ENCODE measurements at regions of chr1 and their contacts with region 1.

Region 1: DNA sequence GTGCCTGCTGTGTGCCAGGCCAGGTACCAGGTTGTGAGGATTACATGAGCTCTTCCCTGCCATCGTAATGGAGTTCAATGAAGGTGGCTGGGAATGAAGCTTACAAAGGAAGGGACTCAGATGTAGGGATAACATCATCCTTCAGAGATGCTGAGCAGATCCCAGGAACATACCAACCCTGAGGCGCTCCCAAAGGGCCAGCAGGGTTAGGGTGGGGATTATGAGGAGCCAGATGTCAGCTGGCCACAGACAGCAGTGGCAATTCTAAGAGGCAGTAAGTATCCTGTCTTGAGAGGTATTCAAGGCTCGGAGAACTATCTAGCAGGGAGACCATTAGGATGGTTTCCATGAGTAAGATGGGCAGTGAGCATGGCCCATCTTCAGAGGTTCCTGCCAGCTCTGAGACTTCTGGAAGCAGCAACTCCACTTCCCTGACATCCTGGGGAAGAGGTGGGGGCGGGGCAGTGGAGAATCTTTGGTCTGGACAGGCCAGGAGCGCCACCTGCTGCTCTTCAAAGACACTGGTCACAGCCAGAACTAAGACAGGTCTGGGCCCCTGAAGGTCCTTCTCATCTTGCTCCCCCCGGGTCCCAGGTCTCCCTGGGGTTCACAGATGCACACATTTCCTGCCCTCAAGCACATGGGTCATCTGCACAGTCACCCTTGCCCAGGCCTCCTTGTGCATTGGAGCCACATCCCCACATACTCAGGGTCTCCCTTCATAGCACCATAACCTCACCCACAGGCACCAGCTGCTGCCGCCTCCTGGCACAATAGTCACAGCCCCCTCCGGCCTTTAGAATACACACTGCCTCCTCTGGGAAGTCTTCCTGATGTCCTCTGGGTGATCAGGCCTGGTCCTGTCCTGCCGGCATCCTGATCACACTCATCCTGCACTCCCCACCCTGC is 2.7 kb upstream of the SDC3 start:
- DNase-seq: peak; percentile 85

Region 2: DNA sequence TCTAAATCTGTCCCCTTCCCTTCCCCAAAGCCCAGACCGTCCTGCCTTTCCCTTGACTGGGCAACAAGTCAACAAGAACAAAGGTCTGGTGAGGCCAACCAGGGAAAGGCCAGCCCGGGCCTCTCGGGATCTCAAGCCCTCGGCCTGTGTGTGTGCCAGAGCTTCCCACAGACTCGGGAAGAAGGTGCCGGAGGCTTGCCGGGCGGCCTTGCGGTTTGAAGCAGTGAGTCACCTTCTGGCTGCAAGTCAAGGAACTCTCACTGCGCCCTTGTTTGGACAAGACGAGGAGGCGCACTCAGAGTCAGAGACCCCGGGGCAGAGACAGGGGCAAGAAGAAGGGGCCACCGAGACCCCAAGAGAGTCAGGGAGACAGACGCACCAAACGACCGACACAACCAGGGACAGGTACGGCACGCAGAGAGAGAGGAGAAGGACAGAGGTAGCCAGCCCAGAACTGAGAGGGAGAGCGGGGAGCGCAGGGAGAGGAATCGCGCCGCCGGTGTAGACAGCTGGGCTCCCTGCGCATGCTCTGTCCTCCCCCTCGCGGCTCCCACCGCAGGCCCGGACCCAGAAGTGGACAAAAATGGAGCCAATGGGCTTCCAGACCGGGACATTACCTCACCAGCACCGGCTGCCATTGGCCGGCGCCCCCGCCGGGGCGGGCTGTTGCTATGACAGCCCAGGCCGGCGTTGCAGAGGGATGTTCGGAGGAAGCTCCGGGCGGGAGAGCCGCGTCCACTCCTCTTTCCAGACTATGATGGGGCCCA is 87.1 kb before region 1 on chr1:
- in situ Hi-C with region 1: loop called (anchors 25 kb)
- DNase-seq: peak; percentile 97